Mammary epithelial cell (primary cell): ENCODE measurements at regions of chr3 and their contacts with region 1.

Region 1: DNA sequence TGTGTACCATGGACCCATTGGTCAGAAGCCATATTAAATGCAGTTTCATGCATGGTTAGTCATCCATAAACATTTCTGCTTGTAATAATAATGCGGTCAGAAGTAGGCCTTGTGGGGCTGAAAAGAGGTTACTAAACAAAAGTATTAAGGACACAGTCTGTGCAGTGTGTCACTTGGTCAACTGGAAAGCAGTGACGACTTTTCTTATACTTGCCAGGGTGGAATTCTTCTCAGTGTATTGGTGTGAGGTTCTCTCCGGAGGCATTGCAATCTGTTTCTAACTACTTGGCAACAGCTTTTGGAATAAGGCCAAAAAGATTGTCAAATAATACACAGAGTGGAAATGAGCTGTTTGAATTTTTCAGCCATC is 46.8 kb downstream of the CHL1 start:
- DNase-seq: no peak
- H3K4me3 ChIP-seq: no peak overlapping the region
- H3K27ac ChIP-seq: no peak overlapping the region
- H3K4me1 ChIP-seq: no peaks in the 10 kb centered on the region
- H3K27me3 ChIP-seq: no peaks in the 10 kb centered on the region
- CTCF ChIP-seq: no peak

Region 2: DNA sequence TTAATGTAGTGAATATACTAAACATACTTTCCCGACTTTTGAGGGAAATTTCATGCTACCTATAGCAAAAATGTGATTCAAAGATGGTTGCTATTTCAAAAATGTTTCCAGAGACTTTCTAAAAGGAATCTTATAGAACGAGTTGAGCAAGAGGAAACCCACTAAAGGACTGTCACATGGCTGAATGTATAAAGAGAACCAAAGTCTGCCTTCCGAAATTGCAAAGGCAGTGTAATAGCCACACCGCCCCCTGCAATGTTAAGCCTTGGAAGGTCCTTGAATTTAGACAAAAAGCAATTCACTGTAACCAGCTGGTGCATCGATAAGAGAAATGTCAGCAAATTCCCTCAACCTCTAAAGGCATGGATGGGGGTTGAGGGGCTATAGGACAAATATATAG is 96.0 kb after region 1 on chr3:
- CTCF ChIA-PET with region 1: no interaction called
- dilution Hi-C with region 1: loop called (anchors 5 kb)
- in situ Hi-C with region 1: no loop called
- intact Hi-C with region 1: no loop called
- DNase-seq: no peak
- H3K4me3 ChIP-seq: no peak overlapping the region
- H3K27ac ChIP-seq: no peak overlapping the region
- H3K4me1 ChIP-seq: no peaks in the 10 kb centered on the region
- H3K27me3 ChIP-seq: no peaks in the 10 kb centered on the region
- CTCF ChIP-seq: no peak

Region 3: GRCh38 chr3:452221-452620 is 208.9 kb after region 1 on chr3:
- CTCF ChIA-PET with region 1: no interaction called
- dilution Hi-C with region 1: no loop called
- in situ Hi-C with region 1: no loop called
- intact Hi-C with region 1: no loop called
- DNase-seq: no peak
- H3K4me3 ChIP-seq: no peak overlapping the region
- H3K27ac ChIP-seq: no peak overlapping the region
- H3K4me1 ChIP-seq: no peaks in the 10 kb centered on the region
- H3K27me3 ChIP-seq: no peaks in the 10 kb centered on the region
- CTCF ChIP-seq: no peak